ENCODE measurements at regions of chr3 and their contacts with region 1.

Region 1: DNA sequence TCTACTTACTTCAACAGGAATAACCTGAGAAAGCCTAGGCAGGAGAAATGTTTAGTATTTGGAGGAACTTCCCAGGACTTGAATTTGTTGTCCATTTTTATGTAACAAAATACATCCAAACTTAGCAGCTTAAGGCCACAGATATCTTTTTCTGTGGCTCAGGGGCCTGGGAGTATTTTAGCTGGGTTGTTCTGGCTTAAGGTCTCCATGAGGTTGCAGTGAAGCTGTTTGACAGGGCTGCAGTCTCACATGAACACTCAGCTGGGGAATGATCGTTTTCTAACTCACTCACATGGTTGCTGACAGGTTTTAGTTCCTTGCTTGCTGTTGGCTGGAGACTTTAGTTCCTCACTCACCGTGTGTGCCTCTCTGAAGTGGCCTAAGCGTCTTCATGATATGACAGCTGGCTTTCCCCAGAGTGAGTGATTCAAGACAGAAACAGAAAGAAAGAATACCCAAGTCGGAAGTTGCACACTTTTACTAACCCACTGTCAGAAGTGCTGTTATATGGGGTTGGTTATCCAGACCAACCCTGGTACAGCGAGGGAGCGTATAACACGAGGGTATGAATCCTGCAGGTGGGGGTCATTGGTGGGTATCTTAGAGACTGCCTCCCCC is 229.7 kb upstream of the TBL1XR1 start:
- DNase-seq: peak; percentile 85
- H3K4me3 Mint-ChIP-seq: peak overlapping the region; percentile 40
- H3K27ac Mint-ChIP-seq: peak overlapping the region; percentile 92
- H3K4me1 Mint-ChIP-seq: peaks cover 29% of the 10 kb centered on the region
- H3K27me3 Mint-ChIP-seq: peaks cover 2% of the 10 kb centered on the region

Region 2: DNA sequence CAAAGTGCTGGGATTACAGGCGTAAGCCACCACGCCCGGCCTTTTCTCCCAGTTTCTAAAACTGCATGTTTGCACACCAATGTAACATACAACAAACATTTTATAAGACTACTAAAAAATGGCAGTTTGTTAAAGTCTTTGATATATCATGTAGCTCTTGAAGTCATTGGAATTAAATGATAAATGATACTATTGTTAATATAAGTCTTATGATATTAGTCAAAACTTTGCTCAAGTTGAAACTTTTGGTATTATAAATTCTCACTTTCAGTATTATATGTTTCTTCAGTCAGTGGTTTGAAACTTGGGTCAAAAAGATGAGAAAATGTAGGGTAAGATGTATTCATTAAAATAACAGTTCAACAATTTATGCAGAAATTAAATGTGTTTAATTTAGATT is 112.1 kb before region 1 on chr3:
- CTCF ChIA-PET with region 1: no interaction called
- intact Hi-C with region 1: loop called (anchors 1 kb)
- DNase-seq: no peak
- H3K4me3 Mint-ChIP-seq: no peak overlapping the region
- H3K27ac Mint-ChIP-seq: peak overlapping the region; percentile 46
- H3K4me1 Mint-ChIP-seq: peaks cover 25% of the 10 kb centered on the region
- H3K27me3 Mint-ChIP-seq: peaks cover 1% of the 10 kb centered on the region

Region 3: DNA sequence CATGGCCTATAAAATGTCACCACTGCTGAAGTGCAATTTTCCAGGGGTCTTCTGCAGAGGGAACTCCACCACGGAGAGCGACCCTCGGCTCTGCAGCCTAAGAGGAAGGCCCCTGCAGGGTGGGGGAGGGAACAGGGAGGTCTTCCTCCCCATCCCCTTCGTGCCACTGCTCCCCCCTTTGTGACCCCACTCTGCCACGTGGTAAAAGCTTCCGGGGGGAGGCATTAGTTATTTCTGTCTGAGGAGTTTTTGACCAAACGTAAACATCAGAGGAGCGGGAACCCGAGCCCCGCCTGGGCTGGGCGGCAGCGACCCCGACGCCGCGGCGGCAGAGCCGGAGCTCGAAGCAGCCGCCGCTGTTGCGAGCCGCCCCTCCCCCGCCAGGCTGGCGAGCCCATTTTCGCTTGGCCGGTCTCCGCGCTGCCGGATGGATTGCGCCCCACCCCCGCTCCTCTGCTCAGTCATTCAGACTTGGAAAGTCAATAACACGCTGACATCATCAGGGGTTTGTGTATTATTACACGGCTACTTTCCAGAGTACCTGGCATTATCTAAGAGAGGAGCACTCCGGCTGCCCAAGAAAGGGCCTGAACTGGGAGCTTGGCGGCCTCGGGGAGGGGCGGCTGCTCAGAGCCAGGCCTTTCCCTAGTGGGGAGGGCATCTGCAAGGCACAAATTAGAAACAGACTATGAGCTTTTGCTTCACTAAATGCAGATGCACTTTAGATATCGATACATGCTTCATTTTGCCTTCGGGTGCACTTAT is 67.2 kb before region 1 on chr3:
- CTCF ChIA-PET with region 1: no interaction called
- intact Hi-C with region 1: loop called (anchors 1 kb)
- DNase-seq: peak; percentile 95
- H3K4me3 Mint-ChIP-seq: peak overlapping the region; percentile 72
- H3K27ac Mint-ChIP-seq: peak overlapping the region; percentile 94
- H3K4me1 Mint-ChIP-seq: peaks cover 54% of the 10 kb centered on the region
- H3K27me3 Mint-ChIP-seq: no peaks in the 10 kb centered on the region

Region 4: GRCh38 chr3:177498037-177498856 is 71.3 kb after region 1 on chr3:
- CTCF ChIA-PET with region 1: no interaction called
- intact Hi-C with region 1: no loop called
- DNase-seq: no peak
- H3K4me3 Mint-ChIP-seq: no peak overlapping the region
- H3K27ac Mint-ChIP-seq: no peak overlapping the region
- H3K4me1 Mint-ChIP-seq: no peaks in the 10 kb centered on the region
- H3K27me3 Mint-ChIP-seq: no peaks in the 10 kb centered on the region

Region 5: GRCh38 chr3:177646749-177647148 is 219.8 kb after region 1 on chr3:
- CTCF ChIA-PET with region 1: no interaction called
- intact Hi-C with region 1: loop called (anchors 1 kb)
- DNase-seq: peak; percentile 48
- H3K4me3 Mint-ChIP-seq: no peak overlapping the region
- H3K27ac Mint-ChIP-seq: no peak overlapping the region
- H3K4me1 Mint-ChIP-seq: peaks cover 46% of the 10 kb centered on the region
- H3K27me3 Mint-ChIP-seq: no peaks in the 10 kb centered on the region

Region 6: DNA sequence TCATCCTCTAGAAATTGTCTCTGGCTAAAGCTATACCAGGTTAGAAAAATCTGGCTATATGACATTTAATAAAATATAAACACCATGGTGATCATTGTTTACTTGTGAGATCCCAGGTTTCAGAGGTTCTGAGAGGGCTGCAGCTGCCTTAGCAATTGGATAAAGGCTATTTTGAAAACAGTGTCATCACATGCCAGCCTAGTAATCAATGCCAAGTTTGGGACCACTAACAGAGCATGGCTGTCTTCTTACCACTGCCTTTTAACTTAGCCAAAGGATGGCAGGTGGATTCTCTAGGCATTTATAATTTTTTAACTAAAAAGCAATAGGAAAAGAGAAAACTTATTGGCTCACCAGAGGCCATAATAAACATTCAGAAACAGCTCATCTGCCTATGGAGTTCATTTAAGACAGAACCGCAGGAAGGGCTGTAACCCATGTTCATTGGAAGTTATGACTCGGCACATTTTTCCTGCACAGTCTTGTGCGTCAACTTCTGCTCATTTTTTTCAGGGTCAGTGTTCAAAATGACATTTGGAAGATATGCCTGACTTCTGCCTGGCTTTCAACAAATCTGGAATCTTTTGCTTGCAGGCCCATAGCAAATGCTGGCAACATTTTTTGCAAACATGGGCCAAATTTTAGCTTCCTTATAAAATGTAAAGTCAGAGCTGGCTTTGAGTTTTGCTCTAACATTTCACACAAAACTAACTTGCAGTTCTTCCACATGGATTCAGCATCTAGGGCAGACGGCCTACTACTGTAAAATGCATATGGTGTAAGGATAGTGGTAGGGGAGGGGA is 246.3 kb after region 1 on chr3:
- CTCF ChIA-PET with region 1: no interaction called
- intact Hi-C with region 1: no loop called
- DNase-seq: no peak
- H3K4me3 Mint-ChIP-seq: no peak overlapping the region
- H3K27ac Mint-ChIP-seq: no peak overlapping the region
- H3K4me1 Mint-ChIP-seq: peaks cover 3% of the 10 kb centered on the region
- H3K27me3 Mint-ChIP-seq: no peaks in the 10 kb centered on the region

Region 7: GRCh38 chr3:177824190-177824786 is 397.3 kb after region 1 on chr3:
- CTCF ChIA-PET with region 1: no interaction called
- intact Hi-C with region 1: no loop called
- DNase-seq: no peak
- H3K4me3 Mint-ChIP-seq: no peak overlapping the region
- H3K27ac Mint-ChIP-seq: no peak overlapping the region
- H3K4me1 Mint-ChIP-seq: peaks cover 30% of the 10 kb centered on the region
- H3K27me3 Mint-ChIP-seq: no peaks in the 10 kb centered on the region

Region 8: DNA sequence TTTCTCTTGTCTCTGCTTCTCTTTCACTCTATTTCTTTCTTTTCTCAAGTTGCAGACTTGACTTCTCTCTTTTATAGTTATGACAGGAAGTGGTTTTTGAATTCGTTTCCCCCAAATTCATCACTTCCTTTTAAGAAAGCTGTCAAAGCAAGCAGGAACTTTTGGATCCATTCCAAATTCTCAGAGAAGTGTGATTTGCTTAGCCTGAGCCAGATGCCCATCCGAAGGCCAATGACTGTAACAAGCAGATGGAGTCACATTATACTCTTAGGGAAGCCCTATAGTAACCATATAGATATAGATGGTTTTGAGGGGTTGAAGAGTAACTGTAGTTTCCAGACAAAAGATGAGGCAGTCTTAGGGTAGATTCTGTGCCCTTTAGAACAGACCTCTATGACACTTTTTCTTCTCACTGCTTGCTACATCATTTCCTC is 517.3 kb after region 1 on chr3:
- CTCF ChIA-PET with region 1: no interaction called
- intact Hi-C with region 1: loop called (anchors 1 kb)
- DNase-seq: peak; percentile 24
- H3K4me3 Mint-ChIP-seq: no peak overlapping the region
- H3K27ac Mint-ChIP-seq: peak overlapping the region; percentile 85
- H3K4me1 Mint-ChIP-seq: peaks cover 36% of the 10 kb centered on the region
- H3K27me3 Mint-ChIP-seq: no peaks in the 10 kb centered on the region

Region 9: GRCh38 chr3:178028933-178029332 is 601.9 kb after region 1 on chr3:
- CTCF ChIA-PET with region 1: no interaction called
- intact Hi-C with region 1: no loop called
- DNase-seq: no peak
- H3K4me3 Mint-ChIP-seq: no peak overlapping the region
- H3K27ac Mint-ChIP-seq: no peak overlapping the region
- H3K4me1 Mint-ChIP-seq: no peaks in the 10 kb centered on the region
- H3K27me3 Mint-ChIP-seq: no peaks in the 10 kb centered on the region